Naive thymus-derived CD4-positive, alpha-beta T cell (primary cell): ENCODE measurements at regions of chr3 and their contacts with region 1.

Region 1: DNA sequence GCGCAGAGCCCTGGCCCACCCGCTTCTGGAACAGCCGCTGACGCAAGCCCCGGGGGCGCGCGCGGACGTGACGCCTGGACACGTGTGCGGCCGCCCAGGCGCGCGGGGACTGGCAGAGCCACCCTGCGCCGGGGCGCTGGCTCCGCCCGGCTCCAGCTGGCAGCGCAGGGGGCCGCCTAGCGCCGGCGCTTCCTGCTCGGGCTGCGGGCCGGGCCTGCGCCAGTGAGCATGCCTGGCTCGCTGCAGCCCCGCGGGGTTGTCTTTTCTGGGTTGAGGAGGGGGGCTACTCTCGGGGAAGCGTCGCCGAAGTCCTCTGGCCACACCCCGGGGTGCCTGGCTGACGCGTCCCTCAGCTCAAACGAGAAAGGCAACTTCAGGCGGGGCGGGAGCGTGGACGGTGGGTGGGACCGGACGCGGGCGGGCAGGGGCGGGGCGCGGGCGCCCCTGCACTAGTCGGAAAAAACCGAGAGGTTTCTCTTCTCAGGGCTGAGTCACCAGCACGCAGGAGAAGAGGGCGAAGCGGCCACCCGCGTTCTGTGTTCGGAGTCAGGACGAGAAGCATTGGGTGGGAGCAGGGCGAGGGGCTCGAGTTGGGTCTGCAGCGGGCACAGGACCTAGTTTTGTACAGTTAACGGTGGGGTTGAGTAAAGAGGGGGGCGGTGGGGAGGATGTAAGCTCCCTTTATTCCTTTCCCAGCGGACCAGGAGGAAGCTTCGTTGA is at the start of gene SIAH2:
- DNase-seq: peak; percentile 92 to 95 (median 94)
- ATAC-seq: peak; percentile 89
- H3K4me3 ChIP-seq: peak within 1 kb of the TSS; percentile 81
- H3K4me3 Mint-ChIP-seq: peak within 1 kb of the TSS; percentile 97 to 99 (median 98)
- H3K27ac ChIP-seq: peak within 1 kb of the TSS; percentile 99
- H3K27ac Mint-ChIP-seq: peak within 1 kb of the TSS; percentile 99 to 100 (median 100)
- H3K4me1 ChIP-seq: peaks cover 20 to 22% of the 10 kb centered on the region in 2 donors
- H3K4me1 Mint-ChIP-seq: peaks cover 23 to 59% (median 45%) of the 10 kb centered on the region in 7 donors
- H3K27me3 ChIP-seq: no peaks in the 10 kb centered on the region
- H3K27me3 Mint-ChIP-seq: no peaks in the 10 kb centered on the region
- total RNA-seq, gene SIAH2: 19.8 to 39.2 (median 31.0) TPM

Region 2: GRCh38 chr3:149812606-149813366 is 950.5 kb before region 1 on chr3 and contains the start of gene RNF13:
- CTCF ChIA-PET with region 1: no interaction called
- POLR2A ChIA-PET with region 1: no interaction called
- intact Hi-C with region 1: loop called (anchors 1 to 5 kb)
- DNase-seq: peak; percentile 80 to 94 (median 92)
- ATAC-seq: peak; percentile 96
- H3K4me3 ChIP-seq: peak within 1 kb of the TSS; percentile 95
- H3K4me3 Mint-ChIP-seq: peak within 1 kb of the TSS; percentile 96 to 100 (median 99)
- H3K27ac ChIP-seq: peak within 1 kb of the TSS; percentile 94
- H3K27ac Mint-ChIP-seq: peak within 1 kb of the TSS; percentile 97 to 100 (median 99)
- H3K4me1 ChIP-seq: peaks cover 16 to 34% of the 10 kb centered on the region in 2 donors
- H3K4me1 Mint-ChIP-seq: peaks cover 39 to 54% (median 47%) of the 10 kb centered on the region in 7 donors
- H3K27me3 ChIP-seq: no peaks in the 10 kb centered on the region
- H3K27me3 Mint-ChIP-seq: peaks cover 0 to 14% (median 4%) of the 10 kb centered on the region in 5 donors
- total RNA-seq, gene RNF13: 41.2 to 68.5 (median 66.1) TPM

Region 3: DNA sequence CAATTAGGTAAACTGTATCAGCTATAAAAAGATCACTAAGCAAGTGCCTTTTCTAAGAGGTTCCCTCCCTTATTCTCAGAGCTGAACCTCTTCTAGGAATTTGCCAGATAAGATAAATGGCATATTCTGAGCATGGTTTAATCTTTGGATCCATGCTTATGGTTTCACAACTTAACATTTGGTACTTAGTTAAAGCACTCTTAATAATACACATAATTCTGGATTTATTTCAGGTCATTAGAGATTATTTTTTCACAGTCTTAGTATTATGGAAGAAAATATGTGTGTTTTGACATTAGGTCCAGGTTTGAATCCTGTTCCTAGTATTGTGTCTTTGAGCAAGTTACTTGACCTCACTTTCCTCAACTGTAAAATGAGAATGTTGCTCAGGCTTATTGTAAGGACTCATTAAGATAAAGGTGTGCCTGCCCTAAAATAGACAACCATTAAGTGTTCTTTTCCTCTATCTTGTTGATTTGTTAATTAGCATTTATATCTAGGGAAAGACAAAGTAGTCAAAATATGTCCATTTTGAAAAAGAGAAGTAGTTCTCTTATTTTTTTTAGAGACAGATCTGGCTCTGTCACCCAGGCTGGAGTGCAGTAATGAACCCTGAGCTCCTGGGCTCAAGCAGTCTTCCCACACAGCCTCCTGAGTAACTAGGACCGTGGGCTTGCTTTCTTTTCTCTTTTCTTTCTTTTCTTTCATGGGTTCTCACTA is 311.8 kb before region 1 on chr3:
- CTCF ChIA-PET with region 1: no interaction called
- POLR2A ChIA-PET with region 1: no interaction called
- intact Hi-C with region 1: no loop called
- DNase-seq: no peak
- ATAC-seq: no peak
- H3K4me3 ChIP-seq: no peak overlapping the region
- H3K4me3 Mint-ChIP-seq: no peak overlapping the region
- H3K27ac ChIP-seq: no peak overlapping the region
- H3K27ac Mint-ChIP-seq: peak overlapping the region in 1 of 9 donors; percentile 52
- H3K4me1 ChIP-seq: peaks cover 3 to 4% of the 10 kb centered on the region in 2 donors
- H3K4me1 Mint-ChIP-seq: peaks cover 17 to 60% (median 39%) of the 10 kb centered on the region in 7 donors
- H3K27me3 ChIP-seq: no peaks in the 10 kb centered on the region
- H3K27me3 Mint-ChIP-seq: no peaks in the 10 kb centered on the region

Region 4: DNA sequence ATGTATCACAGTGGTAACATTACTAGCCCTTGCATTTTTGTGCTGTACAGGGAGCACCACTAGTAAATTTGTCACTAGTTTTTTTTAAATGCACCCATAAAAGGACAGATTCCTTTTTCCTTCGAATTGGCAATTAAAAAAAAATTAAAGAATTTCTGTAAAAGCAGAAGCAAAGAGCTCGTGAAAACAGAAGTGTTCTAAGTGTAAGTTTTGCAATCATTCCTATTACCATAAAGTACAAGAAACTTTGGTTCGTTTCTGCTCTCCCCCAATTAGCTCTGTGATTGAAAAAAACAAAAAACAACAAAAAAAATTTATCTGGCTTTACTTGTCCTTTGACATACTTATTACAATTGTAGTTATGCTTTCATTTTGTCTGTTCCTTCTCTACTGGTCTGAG is 222.3 kb before region 1 on chr3:
- CTCF ChIA-PET with region 1: interaction called, 4 read pairs
- POLR2A ChIA-PET with region 1: interaction called, 70 read pairs
- intact Hi-C with region 1: loop called (anchors 1 kb)
- DNase-seq: no peak
- ATAC-seq: no peak
- H3K4me3 ChIP-seq: no peak overlapping the region
- H3K4me3 Mint-ChIP-seq: peak overlapping the region in 1 of 10 donors; percentile 10
- H3K27ac ChIP-seq: peak overlapping the region; percentile 41
- H3K27ac Mint-ChIP-seq: peak overlapping the region in 7 of 9 donors; percentile 45 to 98 (median 81)
- H3K4me1 ChIP-seq: peaks cover 6 to 7% of the 10 kb centered on the region in 2 donors
- H3K4me1 Mint-ChIP-seq: peaks cover 11 to 59% (median 45%) of the 10 kb centered on the region in 7 donors
- H3K27me3 ChIP-seq: no peaks in the 10 kb centered on the region
- H3K27me3 Mint-ChIP-seq: no peaks in the 10 kb centered on the region

Region 5: GRCh38 chr3:150666167-150666566 is 97.1 kb before region 1 on chr3:
- CTCF ChIA-PET with region 1: no interaction called
- POLR2A ChIA-PET with region 1: no interaction called
- intact Hi-C with region 1: no loop called
- DNase-seq: no peak
- ATAC-seq: no peak
- H3K4me3 ChIP-seq: no peak overlapping the region
- H3K4me3 Mint-ChIP-seq: peak overlapping the region in 1 of 10 donors; percentile 58
- H3K27ac ChIP-seq: no peak overlapping the region
- H3K27ac Mint-ChIP-seq: peak overlapping the region in 1 of 9 donors; percentile 16
- H3K4me1 ChIP-seq: no peaks in the 10 kb centered on the region
- H3K4me1 Mint-ChIP-seq: peaks cover 0 to 25% (median 10%) of the 10 kb centered on the region in 7 donors
- H3K27me3 ChIP-seq: peaks cover 0 to 4% of the 10 kb centered on the region in 2 donors
- H3K27me3 Mint-ChIP-seq: peaks cover 5 to 40% (median 10%) of the 10 kb centered on the region in 5 donors

Region 6: GRCh38 chr3:150721285-150722130 is 41.8 kb before region 1 on chr3:
- CTCF ChIA-PET with region 1: interaction called, 7 read pairs
- POLR2A ChIA-PET with region 1: interaction called, 9 read pairs
- intact Hi-C with region 1: loop called (anchors 1 kb)
- DNase-seq: peak in 7 of 9 donors; percentile 33 to 77 (median 70)
- ATAC-seq: peak; percentile 94
- H3K4me3 ChIP-seq: no peak overlapping the region
- H3K4me3 Mint-ChIP-seq: peak overlapping the region in 1 of 10 donors; percentile 3
- H3K27ac ChIP-seq: no peak overlapping the region
- H3K27ac Mint-ChIP-seq: no peak overlapping the region
- H3K4me1 ChIP-seq: no peaks in the 10 kb centered on the region
- H3K4me1 Mint-ChIP-seq: peaks cover 0 to 19% (median 9%) of the 10 kb centered on the region in 7 donors
- H3K27me3 ChIP-seq: no peaks in the 10 kb centered on the region
- H3K27me3 Mint-ChIP-seq: no peaks in the 10 kb centered on the region

Region 7: GRCh38 chr3:150870396-150870795 is 107.1 kb after region 1 on chr3:
- CTCF ChIA-PET with region 1: no interaction called
- POLR2A ChIA-PET with region 1: no interaction called
- intact Hi-C with region 1: loop called (anchors 1 kb)
- DNase-seq: no peak
- ATAC-seq: no peak
- H3K4me3 ChIP-seq: no peak overlapping the region
- H3K4me3 Mint-ChIP-seq: no peak overlapping the region
- H3K27ac ChIP-seq: no peak overlapping the region
- H3K27ac Mint-ChIP-seq: no peak overlapping the region
- H3K4me1 ChIP-seq: no peaks in the 10 kb centered on the region
- H3K4me1 Mint-ChIP-seq: peaks cover 0 to 3% (median 0%) of the 10 kb centered on the region in 7 donors
- H3K27me3 ChIP-seq: no peaks in the 10 kb centered on the region
- H3K27me3 Mint-ChIP-seq: peaks cover 4 to 17% (median 12%) of the 10 kb centered on the region in 5 donors

Region 8: DNA sequence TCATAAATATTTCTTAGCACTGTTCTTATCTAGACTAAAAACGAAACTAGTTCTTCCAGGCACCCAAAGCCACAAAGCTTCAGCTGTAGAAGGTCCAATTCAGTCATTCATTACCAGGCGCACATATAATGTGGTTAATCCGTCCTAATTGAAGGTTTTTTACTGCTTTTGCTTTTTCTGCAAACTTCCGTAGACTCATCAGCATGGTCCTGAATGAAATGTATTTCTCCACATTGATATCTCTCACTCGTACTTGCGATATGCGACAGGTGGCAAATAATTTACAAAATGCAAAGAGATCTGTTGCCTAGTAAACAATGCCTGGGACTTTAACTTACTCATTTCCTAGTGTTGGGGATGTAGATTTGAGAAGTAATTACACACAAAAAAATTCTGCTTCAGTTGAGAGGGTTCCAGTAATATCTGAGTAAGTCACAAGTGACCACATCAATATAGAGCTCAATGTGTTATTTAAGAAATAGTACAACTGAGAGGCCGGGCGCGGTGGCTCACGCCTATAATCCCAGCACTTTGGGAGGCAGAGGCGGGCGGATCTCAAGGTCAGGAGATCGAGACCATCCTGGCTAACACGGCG is 1430.5 kb after region 1 on chr3:
- CTCF ChIA-PET with region 1: no interaction called
- POLR2A ChIA-PET with region 1: no interaction called
- intact Hi-C with region 1: loop called in 1 of 2 experiments (anchors 5 kb)
- DNase-seq: peak in 6 of 9 donors; percentile 44 to 63 (median 51)
- ATAC-seq: peak; percentile 70
- H3K4me3 ChIP-seq: peak overlapping the region; percentile 58
- H3K4me3 Mint-ChIP-seq: peak overlapping the region; percentile 72 to 92 (median 86)
- H3K27ac ChIP-seq: peak overlapping the region; percentile 70
- H3K27ac Mint-ChIP-seq: peak overlapping the region; percentile 76 to 100 (median 93)
- H3K4me1 ChIP-seq: peaks cover 43 to 46% of the 10 kb centered on the region in 2 donors
- H3K4me1 Mint-ChIP-seq: peaks cover 52 to 91% (median 85%) of the 10 kb centered on the region in 7 donors
- H3K27me3 ChIP-seq: no peaks in the 10 kb centered on the region
- H3K27me3 Mint-ChIP-seq: no peaks in the 10 kb centered on the region